Mammary epithelial cell (primary cell): ENCODE measurements at regions of chr12 and their contacts with region 1.

Region 1: DNA sequence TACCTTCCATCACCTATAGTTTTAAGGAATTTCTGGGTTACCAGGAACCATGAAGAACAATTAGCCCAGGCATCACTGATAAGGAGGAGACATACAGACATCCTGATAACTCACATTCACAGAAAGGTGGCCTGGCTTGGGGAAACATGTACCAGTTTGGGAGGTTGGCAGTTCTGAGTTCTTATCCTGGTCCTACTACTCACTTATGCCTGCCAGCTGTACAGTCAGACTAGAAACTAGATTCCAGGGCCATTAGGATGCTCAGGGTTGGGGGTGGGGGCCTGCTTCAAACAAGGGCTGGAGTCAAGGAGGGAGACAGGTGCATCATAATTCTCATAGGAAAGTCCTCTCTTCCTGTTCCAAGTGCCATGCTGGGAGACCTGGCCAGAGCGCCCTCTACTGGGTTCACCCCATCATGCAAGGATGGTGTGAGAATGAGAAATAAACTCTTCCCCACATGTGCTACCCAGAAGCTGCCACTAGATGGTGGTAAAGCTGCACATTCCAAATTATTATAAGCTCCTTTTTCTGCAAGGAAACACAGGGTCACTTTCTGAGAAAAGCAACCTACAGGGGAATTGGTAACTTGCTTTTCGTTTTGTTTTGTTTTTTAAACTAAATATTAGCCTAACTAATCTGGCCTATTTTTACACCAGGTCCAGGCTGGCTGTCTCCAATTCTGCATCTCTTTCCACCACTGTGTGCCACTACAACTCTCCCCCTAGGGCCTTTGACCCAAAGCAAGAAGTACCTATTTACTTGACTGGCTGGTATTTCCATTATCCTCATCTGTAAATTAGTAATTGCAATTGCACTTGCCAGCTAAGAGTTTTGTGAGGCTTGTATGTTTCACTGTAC is 14.5 kb downstream of the OAS2 start:
- DNase-seq: peak; percentile 60
- H3K4me3 ChIP-seq: no peak overlapping the region
- H3K27ac ChIP-seq: no peak overlapping the region
- H3K4me1 ChIP-seq: no peaks in the 10 kb centered on the region
- H3K27me3 ChIP-seq: no peaks in the 10 kb centered on the region
- CTCF ChIP-seq: peak; percentile 93 to 99

Region 2: GRCh38 chr12:112906712-112907414 is 85.9 kb before region 1 on chr12 and contains the start of gene OAS1:
- CTCF ChIA-PET with region 1: no interaction called
- dilution Hi-C with region 1: no loop called
- in situ Hi-C with region 1: loop called in 1 of 2 experiments (anchors 10 kb)
- intact Hi-C with region 1: no loop called
- DNase-seq: peak; percentile 61
- H3K4me3 ChIP-seq: peak within 1 kb of the TSS; percentile 0 to 47 (median 32)
- H3K27ac ChIP-seq: no peak within 1 kb of the TSS
- H3K4me1 ChIP-seq: peaks cover 4% of the 10 kb centered on the region
- H3K27me3 ChIP-seq: no peaks in the 10 kb centered on the region
- CTCF ChIP-seq: no peak
- total RNA-seq, gene OAS1: 4.0 to 4.2 TPM

Region 3: GRCh38 chr12:113030875-113031525 is 38.2 kb after region 1 on chr12:
- CTCF ChIA-PET with region 1: interaction called, 6 read pairs
- dilution Hi-C with region 1: no loop called
- in situ Hi-C with region 1: loop called in 1 of 2 experiments (anchors 5 kb)
- intact Hi-C with region 1: loop called (anchors 1 kb)
- DNase-seq: peak; percentile 66
- H3K4me3 ChIP-seq: no peak overlapping the region
- H3K27ac ChIP-seq: no peak overlapping the region
- H3K4me1 ChIP-seq: peaks cover 3% of the 10 kb centered on the region
- H3K27me3 ChIP-seq: no peaks in the 10 kb centered on the region
- CTCF ChIP-seq: peak; percentile 56 to 68

Region 4: DNA sequence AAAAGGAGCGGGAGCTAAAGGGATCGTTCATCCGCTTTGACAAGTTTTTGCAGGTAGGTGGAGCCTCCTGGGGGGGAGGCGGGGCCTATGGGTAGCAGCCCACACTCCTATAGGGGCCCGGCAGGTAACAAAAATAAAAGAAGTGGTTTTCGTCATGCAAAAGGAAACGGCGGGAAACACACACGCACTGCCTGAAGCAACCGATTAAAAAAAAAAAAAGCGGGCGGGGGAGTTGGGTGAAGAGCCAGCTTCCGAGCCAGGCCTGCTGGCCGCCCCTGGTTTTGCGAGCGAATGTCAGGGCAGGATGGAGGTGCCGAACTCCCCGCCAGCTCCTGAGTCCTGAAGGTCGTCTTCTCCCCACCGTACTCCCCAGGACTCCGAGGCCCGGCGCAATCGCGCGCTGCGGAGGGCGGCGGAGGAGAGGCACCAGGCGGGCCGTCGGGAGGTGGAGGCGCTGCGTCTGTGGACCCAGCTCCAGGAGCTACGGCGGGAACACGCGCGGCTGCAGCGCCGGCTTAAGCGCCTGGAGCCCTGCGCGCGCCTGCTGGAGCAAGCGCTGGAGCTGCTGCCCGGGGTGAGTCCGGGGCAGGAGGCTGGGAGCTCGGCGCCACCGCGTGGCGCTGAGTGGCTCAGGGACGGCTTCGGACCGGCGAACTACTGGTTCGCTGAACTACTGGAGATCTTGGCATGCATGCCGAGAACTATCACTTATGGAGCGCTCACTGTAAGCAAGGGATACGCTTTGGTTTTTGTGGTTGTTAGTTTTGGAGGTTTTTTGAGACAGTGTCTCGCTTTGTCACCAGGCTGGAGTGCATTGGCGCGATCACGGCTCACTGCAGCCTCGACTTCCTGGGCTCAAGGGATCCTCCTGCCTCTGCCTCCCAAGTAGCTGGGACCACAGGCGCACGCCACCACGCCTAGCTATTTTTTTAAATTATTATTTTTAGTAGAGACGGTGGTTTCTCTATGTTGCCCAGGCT is 160.4 kb after region 1 on chr12:
- CTCF ChIA-PET with region 1: interaction called, 9 read pairs
- dilution Hi-C with region 1: no loop called
- in situ Hi-C with region 1: no loop called
- intact Hi-C with region 1: loop called (anchors 1 kb)
- DNase-seq: peak; percentile 79
- H3K4me3 ChIP-seq: peak overlapping the region; percentile 46 to 60 (median 46)
- H3K27ac ChIP-seq: no peak overlapping the region
- H3K4me1 ChIP-seq: peaks cover 25% of the 10 kb centered on the region
- H3K27me3 ChIP-seq: no peaks in the 10 kb centered on the region
- CTCF ChIP-seq: peak; percentile 3 to 69

Region 5: DNA sequence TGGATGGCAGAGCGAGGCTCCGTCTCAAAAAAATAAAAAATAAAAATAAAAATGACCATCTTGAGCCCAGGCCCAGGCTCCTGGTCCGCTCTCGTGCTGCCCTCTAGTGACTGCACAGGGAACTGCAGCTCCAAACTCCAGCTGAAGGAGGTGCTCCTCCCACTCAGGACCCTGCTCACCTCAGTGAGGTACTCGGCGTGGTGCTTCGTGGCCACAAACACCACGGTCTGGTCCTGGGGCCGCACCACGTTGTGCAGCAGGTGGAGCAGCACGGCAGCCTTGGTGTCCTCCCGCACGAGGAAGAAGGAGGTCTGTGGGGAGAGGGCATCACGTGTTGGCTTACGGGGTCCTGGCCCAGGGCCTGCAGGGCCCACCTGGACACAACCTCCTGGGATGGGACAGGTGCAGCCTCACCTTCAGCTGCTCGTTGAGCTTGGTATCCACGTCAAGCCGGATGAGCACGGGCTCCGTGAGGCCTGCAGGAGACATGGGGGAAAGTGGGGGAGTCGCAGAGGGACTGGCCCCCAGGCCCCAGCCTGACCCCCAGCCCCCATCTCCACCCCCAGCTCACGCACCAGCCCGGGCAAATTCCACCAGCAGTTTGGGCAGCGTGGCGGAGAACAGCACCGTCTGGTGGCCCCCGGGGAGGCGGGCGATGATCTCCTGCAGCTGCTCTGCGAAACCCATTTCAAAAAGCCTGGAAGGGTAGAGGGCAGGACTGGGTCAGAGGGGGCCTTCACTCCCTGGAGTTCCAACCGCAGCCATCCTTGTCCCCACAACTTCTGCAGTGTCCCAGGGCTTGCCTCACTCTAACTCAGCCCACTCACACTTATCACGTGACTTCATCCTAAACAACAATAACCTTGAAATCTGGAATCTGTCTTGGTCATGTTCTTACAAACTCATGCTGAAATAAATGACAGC is 182.0 kb after region 1 on chr12:
- CTCF ChIA-PET with region 1: interaction called, 3 read pairs
- dilution Hi-C with region 1: no loop called
- in situ Hi-C with region 1: no loop called
- intact Hi-C with region 1: loop called (anchors 2 kb)
- DNase-seq: peak; percentile 27
- H3K4me3 ChIP-seq: no peak overlapping the region
- H3K27ac ChIP-seq: no peak overlapping the region
- H3K4me1 ChIP-seq: no peaks in the 10 kb centered on the region
- H3K27me3 ChIP-seq: no peaks in the 10 kb centered on the region
- CTCF ChIP-seq: peak; percentile 97 to 98

Region 6: GRCh38 chr12:113325916-113326315 is 333.1 kb after region 1 on chr12:
- CTCF ChIA-PET with region 1: no interaction called
- dilution Hi-C with region 1: no loop called
- in situ Hi-C with region 1: no loop called
- intact Hi-C with region 1: no loop called
- DNase-seq: no peak
- H3K4me3 ChIP-seq: no peak overlapping the region
- H3K27ac ChIP-seq: no peak overlapping the region
- H3K4me1 ChIP-seq: no peaks in the 10 kb centered on the region
- H3K27me3 ChIP-seq: no peaks in the 10 kb centered on the region
- CTCF ChIP-seq: no peak